Aorta (tissue), 5 donors: ENCODE measurements at regions of chr3 and their contacts with region 1.

Region 1: DNA sequence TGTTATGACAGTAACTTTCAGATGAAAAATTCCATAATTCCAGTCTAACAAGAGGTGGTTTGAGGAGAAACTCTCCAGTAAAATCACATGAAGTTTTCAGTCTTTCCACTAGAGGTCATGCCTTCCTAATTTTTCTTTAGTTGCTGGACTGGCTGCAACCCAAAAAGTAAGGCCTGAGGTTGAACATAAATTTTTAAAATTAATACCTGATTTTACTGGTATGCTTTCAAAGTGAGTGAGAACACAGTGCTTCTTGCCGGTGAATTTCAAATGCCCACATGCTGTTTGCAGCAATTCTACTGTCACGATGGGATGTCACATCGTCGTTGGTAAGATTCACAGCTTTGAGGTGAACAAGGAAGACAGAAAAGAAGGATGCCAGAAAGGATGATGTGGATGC is 89.0 kb upstream of the FGF12 start:
- DNase-seq: no peak
- ATAC-seq: no peak
- H3K4me3 ChIP-seq: no peak overlapping the region
- H3K27ac ChIP-seq: no peak overlapping the region
- H3K4me1 ChIP-seq: no peaks in the 10 kb centered on the region
- H3K27me3 ChIP-seq: no peaks in the 10 kb centered on the region

Region 2: DNA sequence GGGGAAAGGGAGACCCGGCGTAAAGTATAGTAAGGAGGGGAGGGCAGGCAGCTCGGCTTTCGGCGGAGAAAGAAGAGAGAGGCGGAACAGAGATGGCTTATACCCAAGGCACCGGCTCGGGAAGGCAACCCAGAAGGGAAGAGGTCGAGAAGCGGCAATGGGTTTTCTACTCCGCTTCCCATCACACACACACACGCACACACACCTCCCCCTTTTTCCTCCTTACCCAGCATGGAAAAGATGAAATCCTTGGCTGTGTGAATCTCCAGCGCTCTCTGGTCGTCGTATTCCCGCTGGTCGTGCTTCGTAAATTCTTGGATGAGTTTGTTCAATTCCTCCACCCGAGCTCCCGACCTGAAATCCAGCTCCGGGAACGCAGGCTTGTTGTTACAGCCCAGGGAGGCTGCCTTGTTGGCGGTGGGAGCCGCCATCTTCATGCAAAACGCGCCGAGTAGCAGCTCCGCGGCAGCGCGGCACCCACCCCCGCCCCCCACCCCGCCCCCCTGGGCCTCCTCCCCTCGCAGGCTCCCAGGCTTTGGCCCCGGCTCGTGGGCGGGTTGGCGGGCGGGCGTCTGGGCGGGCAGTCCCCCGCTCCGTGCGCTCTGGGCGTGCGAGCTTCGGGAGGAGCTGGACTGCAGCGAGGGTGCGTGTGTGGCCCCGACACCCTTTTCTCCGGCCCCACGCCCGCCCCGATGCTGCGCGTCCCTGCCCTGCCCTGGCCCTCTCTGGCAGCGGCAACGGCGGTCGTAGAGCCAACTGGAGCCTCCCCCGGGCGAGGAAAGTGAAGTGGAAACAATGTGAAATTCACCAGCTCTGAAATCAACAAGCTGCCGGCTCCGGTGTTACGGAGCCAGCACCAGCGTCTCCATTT is 101.3 kb after region 1 on chr3 and contains the start of gene MB21D2:
- intact Hi-C with region 1: loop called (anchors 2 to 5 kb)
- DNase-seq: peak; percentile 88 to 92
- ATAC-seq: peak; percentile 91
- H3K4me3 ChIP-seq: peak within 1 kb of the TSS; percentile 55 to 91
- H3K27ac ChIP-seq: peak within 1 kb of the TSS in 1 of 2 donors; percentile 93
- H3K4me1 ChIP-seq: peaks cover 4 to 9% of the 10 kb centered on the region in 2 donors
- H3K27me3 ChIP-seq: no peaks in the 10 kb centered on the region
- total RNA-seq, gene MB21D2: 3.9 to 4.5 TPM

Region 3: GRCh38 chr3:193040836-193041672 is 224.7 kb after region 1 on chr3:
- intact Hi-C with region 1: loop called (anchors 2 kb)
- DNase-seq: no peak
- ATAC-seq: no peak
- H3K4me3 ChIP-seq: no peak overlapping the region
- H3K27ac ChIP-seq: no peak overlapping the region
- H3K4me1 ChIP-seq: no peaks in the 10 kb centered on the region
- H3K27me3 ChIP-seq: no peaks in the 10 kb centered on the region

Region 4: DNA sequence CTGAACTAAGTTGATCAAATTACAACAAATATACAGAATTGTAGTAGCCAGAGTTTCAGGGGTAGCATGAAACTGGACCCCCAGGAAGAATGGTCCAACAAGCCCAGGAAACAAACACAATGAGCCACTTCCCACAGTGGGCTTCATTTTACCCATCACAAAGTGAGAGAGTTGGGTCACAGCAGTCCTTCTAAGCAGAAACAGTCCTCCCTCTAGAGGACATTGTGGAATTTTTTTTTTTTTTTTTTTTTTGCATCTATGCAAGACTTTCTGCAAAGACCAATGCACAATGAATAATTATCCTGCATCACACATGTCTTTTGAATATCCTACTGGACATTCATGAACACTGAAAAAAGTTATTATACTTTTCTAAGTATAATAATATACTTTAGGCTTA is 636.0 kb after region 1 on chr3:
- intact Hi-C with region 1: loop called in 1 of 2 experiments (anchors 10 kb)
- DNase-seq: no peak
- ATAC-seq: no peak
- H3K4me3 ChIP-seq: no peak overlapping the region
- H3K27ac ChIP-seq: no peak overlapping the region
- H3K4me1 ChIP-seq: no peaks in the 10 kb centered on the region
- H3K27me3 ChIP-seq: no peaks in the 10 kb centered on the region

Region 5: DNA sequence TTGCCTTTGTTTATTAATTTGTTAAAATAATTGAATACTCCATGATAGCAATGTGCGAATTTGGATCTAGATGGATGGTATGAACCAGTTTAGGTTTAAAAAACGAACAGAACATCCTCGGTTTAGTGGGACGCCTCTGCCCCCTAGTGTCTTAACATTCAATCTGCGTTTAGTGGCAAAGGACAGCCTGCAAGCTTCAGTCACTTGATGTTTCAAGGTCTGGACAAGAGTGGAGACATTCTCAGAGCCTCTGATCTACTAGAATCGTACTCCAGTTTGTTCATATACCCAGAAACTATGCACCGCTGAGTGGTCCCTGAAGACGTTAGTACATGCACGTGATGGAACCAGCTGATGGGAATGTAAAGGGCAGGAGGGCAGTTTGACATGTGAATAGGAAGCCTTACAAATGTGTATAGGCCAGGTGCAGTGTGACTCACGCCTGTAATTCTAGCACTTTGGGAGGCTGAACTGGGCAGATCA is 756.1 kb after region 1 on chr3:
- intact Hi-C with region 1: loop called (anchors 2 to 5 kb)
- DNase-seq: peak in 1 of 2 donors; percentile 52
- ATAC-seq: peak; percentile 63
- H3K4me3 ChIP-seq: no peak overlapping the region
- H3K27ac ChIP-seq: no peak overlapping the region
- H3K4me1 ChIP-seq: no peaks in the 10 kb centered on the region
- H3K27me3 ChIP-seq: no peaks in the 10 kb centered on the region